ENCODE measurements at regions of chr17 and their contacts with region 1.

Region 1: GRCh38 chr17:34542700-34543336 is 36.6 kb upstream of the TMEM132E start:
- DNase-seq: peak; percentile 47
- H3K4me3 ChIP-seq: peak overlapping the region in 1 of 2 experiments; percentile 46; a peak in 1 of 4 replicates
- H3K27ac ChIP-seq: no peak overlapping the region
- H3K4me1 ChIP-seq: no peaks in the 10 kb centered on the region
- H3K27me3 ChIP-seq: no peaks in the 10 kb centered on the region; the same call in 1 of the 2 replicates
- CTCF ChIP-seq: peak; percentile 94
- EP300 ChIP-seq: no peak
- RAD21 ChIP-seq: peak; percentile 77

Region 2: GRCh38 chr17:34527908-34528470 is 14.8 kb before region 1 on chr17:
- CTCF ChIA-PET with region 1: interaction called, 20 read pairs
- POLR2A ChIA-PET with region 1: no interaction called
- DNase-seq: peak; percentile 22
- H3K4me3 ChIP-seq: peak overlapping the region in 1 of 2 experiments; percentile 46; a peak in 1 of 4 replicates
- H3K27ac ChIP-seq: no peak overlapping the region
- H3K4me1 ChIP-seq: peaks cover 0 to 3% of the 10 kb centered on the region in 2 experiments; a peak in 1 of 4 replicates
- H3K27me3 ChIP-seq: no peaks in the 10 kb centered on the region; the same call in 1 of the 2 replicates
- CTCF ChIP-seq: peak; percentile 28; the same call in 1 of the 2 replicates
- EP300 ChIP-seq: no peak
- RAD21 ChIP-seq: no peak

Region 3: DNA sequence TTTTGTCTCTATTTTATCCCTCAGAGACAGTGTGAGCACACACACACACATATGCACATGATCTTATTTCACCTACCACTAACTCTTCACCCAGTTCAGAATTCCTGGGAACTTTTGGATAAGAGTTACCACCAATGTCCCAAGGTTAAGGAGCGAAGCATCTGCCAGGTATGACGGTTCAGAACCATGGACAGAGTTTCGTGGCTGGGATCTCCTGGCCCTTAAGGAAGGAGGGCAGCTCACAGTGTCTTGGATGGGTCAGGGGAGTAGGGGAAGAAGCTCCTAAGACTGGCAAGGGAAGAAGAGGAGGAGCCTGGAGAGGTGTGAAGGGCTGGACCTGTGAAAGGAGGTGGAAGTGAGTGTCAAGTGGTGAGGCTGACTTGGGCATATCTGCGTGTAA is 13.6 kb after region 1 on chr17:
- CTCF ChIA-PET with region 1: interaction called, 69 read pairs
- POLR2A ChIA-PET with region 1: no interaction called
- DNase-seq: no peak
- H3K4me3 ChIP-seq: no peak overlapping the region
- H3K27ac ChIP-seq: no peak overlapping the region
- H3K4me1 ChIP-seq: no peaks in the 10 kb centered on the region
- H3K27me3 ChIP-seq: no peaks in the 10 kb centered on the region
- CTCF ChIP-seq: no peak
- EP300 ChIP-seq: no peak
- RAD21 ChIP-seq: no peak

Region 4: GRCh38 chr17:34579017-34579946 is 36.5 kb after region 1 on chr17 and contains the start of gene TMEM132E:
- CTCF ChIA-PET with region 1: interaction called, 14 read pairs
- POLR2A ChIA-PET with region 1: no interaction called
- DNase-seq: peak; percentile 75
- H3K4me3 ChIP-seq: peak within 1 kb of the TSS; percentile 38 to 41
- H3K27ac ChIP-seq: no peak within 1 kb of the TSS
- H3K4me1 ChIP-seq: peaks cover 0 to 18% of the 10 kb centered on the region in 2 experiments; a peak in 1 of 4 replicates
- H3K27me3 ChIP-seq: peaks cover 76% of the 10 kb centered on the region
- CTCF ChIP-seq: no peak
- EP300 ChIP-seq: no peak
- RAD21 ChIP-seq: no peak
- polyA plus RNA-seq, gene TMEM132E: not detected in 2 replicates

Region 5: GRCh38 chr17:34645594-34645993 is 102.8 kb after region 1 on chr17:
- CTCF ChIA-PET with region 1: interaction called, 10 read pairs
- POLR2A ChIA-PET with region 1: no interaction called
- DNase-seq: peak; percentile 79
- H3K4me3 ChIP-seq: no peak overlapping the region
- H3K27ac ChIP-seq: no peak overlapping the region
- H3K4me1 ChIP-seq: peaks cover 0 to 33% of the 10 kb centered on the region in 2 experiments; a peak in 2 of 4 replicates
- H3K27me3 ChIP-seq: no peaks in the 10 kb centered on the region
- CTCF ChIP-seq: no peak
- EP300 ChIP-seq: 0 out of 4 replicates have a peak, but pooled peaks of 1 of the 2 experiments have one; percentile 43
- RAD21 ChIP-seq: no peak

Region 6: DNA sequence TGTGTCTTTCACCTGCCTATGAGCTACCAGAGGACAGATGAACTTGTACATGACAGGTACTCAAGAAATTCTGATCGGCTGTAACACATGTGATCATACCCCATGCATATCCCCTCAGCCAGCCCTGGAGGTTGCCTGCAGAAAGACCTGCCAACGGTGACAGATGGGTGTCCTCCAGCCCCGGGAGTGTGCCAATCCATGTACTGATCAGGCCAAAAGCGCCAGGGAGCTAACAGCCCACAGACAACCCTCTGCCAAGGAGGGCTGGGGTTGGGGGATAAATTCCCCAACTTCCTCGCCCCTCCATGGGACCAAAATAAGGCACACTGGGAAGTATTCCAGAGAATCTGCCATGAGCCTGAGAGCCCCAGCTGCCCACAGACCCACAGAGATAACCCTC is 229.1 kb after region 1 on chr17:
- CTCF ChIA-PET with region 1: no interaction called
- POLR2A ChIA-PET with region 1: no interaction called
- DNase-seq: no peak
- H3K4me3 ChIP-seq: no peak overlapping the region
- H3K27ac ChIP-seq: no peak overlapping the region
- H3K4me1 ChIP-seq: peaks cover 0 to 15% of the 10 kb centered on the region in 2 experiments; a peak in 1 of 4 replicates
- H3K27me3 ChIP-seq: no peaks in the 10 kb centered on the region
- CTCF ChIP-seq: no peak
- EP300 ChIP-seq: no peak
- RAD21 ChIP-seq: no peak

Region 7: GRCh38 chr17:34892461-34893249 is 349.8 kb after region 1 on chr17:
- CTCF ChIA-PET with region 1: interaction called, 51 read pairs
- POLR2A ChIA-PET with region 1: no interaction called
- DNase-seq: peak; percentile 86
- H3K4me3 ChIP-seq: peak overlapping the region in 1 of 2 experiments; percentile 51; a peak in 1 of 4 replicates
- H3K27ac ChIP-seq: no peak overlapping the region
- H3K4me1 ChIP-seq: no peaks in the 10 kb centered on the region
- H3K27me3 ChIP-seq: no peaks in the 10 kb centered on the region
- CTCF ChIP-seq: peak; percentile 50
- EP300 ChIP-seq: no peak
- RAD21 ChIP-seq: peak; percentile 91